PC-9 (cell line): ENCODE measurements at regions of chr15 and their contacts with region 1.

Region 1: GRCh38 chr15:78108299-78109084 is 16.1 kb downstream of the SH2D7 start:
- DNase-seq: peak; percentile 69 to 76
- H3K4me3 ChIP-seq: no peak overlapping the region
- H3K27ac ChIP-seq: no peak overlapping the region
- H3K4me1 ChIP-seq: peaks cover 18% of the 10 kb centered on the region
- H3K27me3 ChIP-seq: no peaks in the 10 kb centered on the region
- CTCF ChIP-seq: peak; percentile 86

Region 2: GRCh38 chr15:77907824-77908751 is 200.4 kb before region 1 on chr15:
- CTCF ChIA-PET with region 1: no interaction called
- POLR2A ChIA-PET with region 1: no interaction called
- intact Hi-C with region 1: loop called (anchors 1 kb)
- DNase-seq: peak in 1 of 2 experiments; percentile 57
- H3K4me3 ChIP-seq: no peak overlapping the region
- H3K27ac ChIP-seq: no peak overlapping the region
- H3K4me1 ChIP-seq: no peaks in the 10 kb centered on the region
- H3K27me3 ChIP-seq: no peaks in the 10 kb centered on the region
- CTCF ChIP-seq: no peak

Region 3: GRCh38 chr15:77966540-77967290 is 141.8 kb before region 1 on chr15:
- CTCF ChIA-PET with region 1: interaction called, 6 read pairs
- POLR2A ChIA-PET with region 1: no interaction called
- intact Hi-C with region 1: loop called (anchors 1 kb)
- DNase-seq: peak in 1 of 2 experiments; percentile 38
- H3K4me3 ChIP-seq: no peak overlapping the region
- H3K27ac ChIP-seq: no peak overlapping the region
- H3K4me1 ChIP-seq: peaks cover 13% of the 10 kb centered on the region
- H3K27me3 ChIP-seq: no peaks in the 10 kb centered on the region
- CTCF ChIP-seq: peak; percentile 87

Region 4: DNA sequence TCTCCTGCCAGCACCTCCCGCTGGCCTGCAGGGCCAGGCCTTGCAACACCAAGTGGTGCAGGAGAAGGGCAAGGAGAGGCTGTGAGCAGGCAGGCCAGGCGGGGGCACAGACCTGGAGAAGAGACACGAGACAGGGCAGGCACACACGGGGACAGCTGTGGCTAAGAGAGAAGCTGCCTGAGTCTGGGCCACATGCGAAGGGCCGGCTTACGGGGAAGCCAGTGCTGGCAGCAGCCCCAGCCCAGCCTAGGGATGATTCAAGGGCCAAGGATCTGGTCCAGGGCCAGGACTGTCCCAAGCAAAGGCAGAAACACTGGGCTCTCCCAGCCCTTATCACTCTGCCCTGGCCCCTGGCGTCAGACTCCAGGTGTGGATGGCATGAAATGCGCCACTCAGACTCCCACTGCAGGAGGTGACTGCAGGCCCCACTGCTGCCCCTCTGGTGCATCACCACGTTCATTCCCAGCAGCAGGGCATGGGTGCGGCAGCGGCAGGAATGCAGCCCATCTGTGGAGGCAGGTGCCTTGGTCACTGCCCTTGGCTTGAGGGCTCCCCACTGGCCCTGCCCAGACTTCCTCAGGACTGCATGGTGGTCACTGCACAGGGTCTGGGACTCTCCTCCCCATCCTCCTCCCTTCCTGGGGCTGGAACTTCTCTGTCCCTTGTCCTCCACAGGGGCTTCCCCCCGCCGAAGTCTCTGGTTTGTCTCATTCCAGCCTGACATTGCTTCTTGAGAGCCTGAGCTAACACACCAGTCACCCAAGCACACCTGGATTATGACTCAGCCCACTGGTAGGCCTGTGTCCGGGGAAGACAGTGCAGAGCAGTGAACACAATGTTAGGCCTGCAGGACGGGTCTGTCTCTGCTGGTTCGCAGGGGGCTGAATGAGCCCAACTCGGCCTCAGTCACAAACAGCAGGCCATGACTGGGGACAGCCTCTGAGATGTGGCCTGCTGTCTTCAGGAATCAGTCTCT is 100.3 kb before region 1 on chr15:
- CTCF ChIA-PET with region 1: no interaction called
- POLR2A ChIA-PET with region 1: no interaction called
- intact Hi-C with region 1: loop called (anchors 1 kb)
- DNase-seq: peak; percentile 82 to 86
- H3K4me3 ChIP-seq: no peak overlapping the region
- H3K27ac ChIP-seq: peak overlapping the region; percentile 49
- H3K4me1 ChIP-seq: peaks cover 41% of the 10 kb centered on the region
- H3K27me3 ChIP-seq: no peaks in the 10 kb centered on the region
- CTCF ChIP-seq: no peak

Region 5: DNA sequence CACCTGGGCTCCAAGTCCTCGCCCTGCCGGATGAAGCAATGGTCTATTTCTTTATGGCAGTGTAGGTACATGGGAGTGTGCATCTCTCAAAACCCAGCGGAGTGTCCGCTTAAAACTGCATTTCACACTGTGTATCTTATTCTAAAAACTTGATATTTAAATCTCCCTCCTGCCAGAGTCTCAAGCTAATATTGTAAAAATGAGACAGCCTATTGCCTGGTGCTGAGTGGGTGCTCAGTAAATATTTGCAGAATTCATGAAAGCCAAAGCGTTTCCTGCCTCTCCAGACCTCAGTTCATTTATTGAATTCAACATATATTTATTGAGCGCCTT is 30.6 kb before region 1 on chr15:
- CTCF ChIA-PET with region 1: no interaction called
- POLR2A ChIA-PET with region 1: no interaction called
- intact Hi-C with region 1: no loop called
- DNase-seq: no peak
- H3K4me3 ChIP-seq: peak overlapping the region; percentile 49
- H3K27ac ChIP-seq: no peak overlapping the region
- H3K4me1 ChIP-seq: peaks cover 24% of the 10 kb centered on the region
- H3K27me3 ChIP-seq: no peaks in the 10 kb centered on the region
- CTCF ChIP-seq: no peak

Region 6: DNA sequence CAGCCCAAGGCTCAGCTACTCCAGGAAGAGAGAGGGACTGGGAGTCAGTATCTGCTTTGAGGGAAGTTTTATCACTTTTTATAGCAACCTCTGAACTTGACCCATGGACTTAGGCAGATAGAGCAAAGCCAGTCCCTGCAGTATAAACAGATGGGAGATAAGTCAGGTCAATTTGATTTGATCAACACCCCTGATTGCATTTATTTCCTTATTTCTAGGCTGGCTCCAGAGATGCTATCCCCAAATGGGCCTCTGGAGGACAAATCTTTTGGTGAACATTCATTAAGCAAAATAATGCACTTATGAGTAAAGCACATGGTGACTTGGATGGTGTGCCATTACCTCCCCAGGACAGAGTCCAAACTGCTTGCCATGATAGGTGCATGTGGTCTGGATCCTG is 31.8 kb after region 1 on chr15:
- CTCF ChIA-PET with region 1: no interaction called
- POLR2A ChIA-PET with region 1: no interaction called
- intact Hi-C with region 1: no loop called
- DNase-seq: no peak
- H3K4me3 ChIP-seq: no peak overlapping the region
- H3K27ac ChIP-seq: no peak overlapping the region
- H3K4me1 ChIP-seq: no peaks in the 10 kb centered on the region
- H3K27me3 ChIP-seq: no peaks in the 10 kb centered on the region
- CTCF ChIP-seq: no peak

Region 7: GRCh38 chr15:78155355-78155939 is 47.0 kb after region 1 on chr15:
- CTCF ChIA-PET with region 1: no interaction called
- POLR2A ChIA-PET with region 1: no interaction called
- intact Hi-C with region 1: no loop called
- DNase-seq: no peak
- H3K4me3 ChIP-seq: no peak overlapping the region
- H3K27ac ChIP-seq: no peak overlapping the region
- H3K4me1 ChIP-seq: peaks cover 18% of the 10 kb centered on the region
- H3K27me3 ChIP-seq: no peaks in the 10 kb centered on the region
- CTCF ChIP-seq: no peak

Region 8: DNA sequence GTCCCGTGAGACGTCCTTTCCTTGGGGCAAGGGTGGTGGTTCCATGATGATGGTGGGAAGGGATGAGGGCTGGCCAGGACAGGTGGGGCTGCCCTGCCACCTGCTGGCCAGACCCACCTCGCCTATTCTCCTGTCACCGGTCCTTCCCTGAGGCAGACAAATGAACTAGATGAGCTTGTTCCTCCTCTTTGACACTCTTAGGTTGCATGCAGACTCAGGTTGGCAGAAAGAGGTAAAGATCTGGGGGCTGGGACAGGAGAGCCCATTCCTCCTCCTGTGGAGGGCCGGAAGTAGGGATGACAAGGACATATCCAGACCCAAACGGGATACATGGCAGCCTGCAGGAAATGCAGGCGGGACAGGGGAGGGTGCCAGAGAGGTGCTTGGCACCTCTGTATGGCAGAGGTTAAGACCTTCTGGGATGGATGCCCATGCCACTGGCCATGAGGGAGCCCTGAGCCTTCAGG is 87.3 kb after region 1 on chr15:
- CTCF ChIA-PET with region 1: interaction called, 6 read pairs
- POLR2A ChIA-PET with region 1: no interaction called
- intact Hi-C with region 1: loop called (anchors 1 kb)
- DNase-seq: peak; percentile 46 to 53
- H3K4me3 ChIP-seq: no peak overlapping the region
- H3K27ac ChIP-seq: no peak overlapping the region
- H3K4me1 ChIP-seq: no peaks in the 10 kb centered on the region
- H3K27me3 ChIP-seq: no peaks in the 10 kb centered on the region
- CTCF ChIP-seq: peak; percentile 81

Region 9: GRCh38 chr15:78308422-78309032 is 200.0 kb after region 1 on chr15:
- CTCF ChIA-PET with region 1: no interaction called
- POLR2A ChIA-PET with region 1: no interaction called
- intact Hi-C with region 1: loop called (anchors 5 kb)
- DNase-seq: peak in 1 of 2 experiments; percentile 68
- H3K4me3 ChIP-seq: no peak overlapping the region
- H3K27ac ChIP-seq: no peak overlapping the region
- H3K4me1 ChIP-seq: peaks cover 26% of the 10 kb centered on the region
- H3K27me3 ChIP-seq: no peaks in the 10 kb centered on the region
- CTCF ChIP-seq: peak; percentile 86

Region 10: GRCh38 chr15:78750566-78750965 is 642.1 kb after region 1 on chr15:
- CTCF ChIA-PET with region 1: no interaction called
- POLR2A ChIA-PET with region 1: no interaction called
- intact Hi-C with region 1: loop called (anchors 1 kb)
- DNase-seq: no peak
- H3K4me3 ChIP-seq: peak overlapping the region; percentile 35; the same call in 1 of the 2 replicates
- H3K27ac ChIP-seq: no peak overlapping the region
- H3K4me1 ChIP-seq: no peaks in the 10 kb centered on the region; the same call in 1 of the 2 replicates
- H3K27me3 ChIP-seq: no peaks in the 10 kb centered on the region
- CTCF ChIP-seq: no peak